Activated B cell treated with CpG ODN at 0.5 μM for 24 hours (primary cell): ENCODE measurements at regions of chrX and their contacts with region 1.

Region 1: GRCh38 chrX:37818031-37818430 is 29.3 kb downstream of the DYNLT3 start:
- DNase-seq: no peak
- ATAC-seq: peak; percentile 48
- H3K4me3 Mint-ChIP-seq: peak overlapping the region; percentile 78
- H3K27ac Mint-ChIP-seq: peak overlapping the region; percentile 93
- H3K4me1 Mint-ChIP-seq: peaks cover 81% of the 10 kb centered on the region
- H3K27me3 Mint-ChIP-seq: no peaks in the 10 kb centered on the region
- CTCF ChIP-seq: no peak

Region 2: GRCh38 chrX:37722595-37722994 is 95.4 kb before region 1 on chrX:
- CTCF ChIA-PET with region 1: no interaction called
- POLR2A ChIA-PET with region 1: no interaction called
- intact Hi-C with region 1: no loop called
- DNase-seq: no peak
- ATAC-seq: no peak
- H3K4me3 Mint-ChIP-seq: no peak overlapping the region
- H3K27ac Mint-ChIP-seq: no peak overlapping the region
- H3K4me1 Mint-ChIP-seq: no peaks in the 10 kb centered on the region
- H3K27me3 Mint-ChIP-seq: peaks cover 5% of the 10 kb centered on the region
- CTCF ChIP-seq: no peak

Region 3: DNA sequence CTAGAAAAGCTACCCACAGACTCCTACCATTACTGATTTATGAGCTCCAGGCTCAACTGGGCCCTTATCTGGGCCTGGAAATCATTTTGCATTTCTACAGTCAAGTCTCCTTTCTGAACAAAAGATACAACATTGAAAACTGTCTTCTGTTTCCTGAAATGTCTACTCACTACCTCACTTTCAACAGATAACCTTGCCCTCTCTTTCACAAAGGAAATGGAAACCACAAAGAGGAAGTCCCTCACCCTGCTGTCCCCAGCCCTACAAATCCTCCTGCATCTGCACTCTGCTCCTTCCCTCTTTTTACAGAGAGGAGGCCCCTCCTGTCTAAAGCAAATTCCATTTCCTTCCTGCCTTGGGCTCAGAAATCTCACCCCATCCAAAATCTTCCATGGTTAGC is 63.0 kb before region 1 on chrX:
- CTCF ChIA-PET with region 1: interaction called, 3 read pairs
- POLR2A ChIA-PET with region 1: interaction called, 10 read pairs
- intact Hi-C with region 1: loop called (anchors 2 kb)
- DNase-seq: no peak
- ATAC-seq: peak; percentile 93
- H3K4me3 Mint-ChIP-seq: no peak overlapping the region
- H3K27ac Mint-ChIP-seq: no peak overlapping the region
- H3K4me1 Mint-ChIP-seq: peaks cover 37% of the 10 kb centered on the region
- H3K27me3 Mint-ChIP-seq: no peaks in the 10 kb centered on the region
- CTCF ChIP-seq: no peak

Region 4: DNA sequence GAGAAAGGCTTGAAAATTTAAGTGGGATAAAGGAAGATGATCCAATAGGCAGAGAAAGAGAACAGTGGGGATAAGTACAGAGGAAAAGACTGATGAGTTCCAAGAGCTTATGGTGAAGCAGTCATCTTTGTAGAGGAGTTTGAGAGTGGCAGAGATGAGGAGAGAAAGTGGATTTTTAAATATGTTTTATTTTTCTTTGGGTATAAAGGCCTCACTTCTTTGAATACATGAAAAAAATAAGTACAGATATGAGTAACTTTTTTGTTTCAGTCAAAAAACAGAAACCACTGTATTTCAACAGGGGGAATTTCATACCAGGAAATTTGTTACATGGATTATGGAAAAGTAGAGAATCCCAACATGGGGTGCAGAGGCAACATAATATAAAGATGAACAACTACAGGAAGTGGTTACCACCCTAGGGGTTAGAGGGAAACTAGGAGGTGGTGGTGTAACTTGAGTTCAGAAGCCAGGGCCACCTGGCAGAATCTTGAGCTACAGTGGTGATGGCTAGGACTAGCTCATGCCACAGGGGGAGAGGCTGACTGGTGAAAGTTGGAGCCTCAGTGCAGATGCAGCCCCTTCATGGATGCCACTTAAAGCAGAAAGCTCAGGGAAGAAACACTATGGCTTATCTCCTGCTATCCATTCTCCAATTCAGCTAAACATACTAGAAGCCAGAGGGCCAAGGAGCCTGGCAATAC is 41.6 kb before region 1 on chrX:
- CTCF ChIA-PET with region 1: interaction called, 29 read pairs
- POLR2A ChIA-PET with region 1: interaction called, 155 read pairs
- intact Hi-C with region 1: loop called (anchors 5 kb)
- DNase-seq: no peak
- ATAC-seq: peak; percentile 73
- H3K4me3 Mint-ChIP-seq: peak overlapping the region; percentile 50
- H3K27ac Mint-ChIP-seq: peak overlapping the region; percentile 87
- H3K4me1 Mint-ChIP-seq: peaks cover 33% of the 10 kb centered on the region
- H3K27me3 Mint-ChIP-seq: no peaks in the 10 kb centered on the region
- CTCF ChIP-seq: no peak

Region 5: GRCh38 chrX:37796805-37797204 is 21.2 kb before region 1 on chrX:
- CTCF ChIA-PET with region 1: interaction called, 34 read pairs
- POLR2A ChIA-PET with region 1: interaction called, 13 read pairs
- intact Hi-C with region 1: loop called (anchors 2 kb)
- DNase-seq: no peak
- ATAC-seq: peak; percentile 90
- H3K4me3 Mint-ChIP-seq: peak overlapping the region; percentile 28
- H3K27ac Mint-ChIP-seq: peak overlapping the region; percentile 79
- H3K4me1 Mint-ChIP-seq: peaks cover 79% of the 10 kb centered on the region
- H3K27me3 Mint-ChIP-seq: no peaks in the 10 kb centered on the region
- CTCF ChIP-seq: no peak

Region 6: DNA sequence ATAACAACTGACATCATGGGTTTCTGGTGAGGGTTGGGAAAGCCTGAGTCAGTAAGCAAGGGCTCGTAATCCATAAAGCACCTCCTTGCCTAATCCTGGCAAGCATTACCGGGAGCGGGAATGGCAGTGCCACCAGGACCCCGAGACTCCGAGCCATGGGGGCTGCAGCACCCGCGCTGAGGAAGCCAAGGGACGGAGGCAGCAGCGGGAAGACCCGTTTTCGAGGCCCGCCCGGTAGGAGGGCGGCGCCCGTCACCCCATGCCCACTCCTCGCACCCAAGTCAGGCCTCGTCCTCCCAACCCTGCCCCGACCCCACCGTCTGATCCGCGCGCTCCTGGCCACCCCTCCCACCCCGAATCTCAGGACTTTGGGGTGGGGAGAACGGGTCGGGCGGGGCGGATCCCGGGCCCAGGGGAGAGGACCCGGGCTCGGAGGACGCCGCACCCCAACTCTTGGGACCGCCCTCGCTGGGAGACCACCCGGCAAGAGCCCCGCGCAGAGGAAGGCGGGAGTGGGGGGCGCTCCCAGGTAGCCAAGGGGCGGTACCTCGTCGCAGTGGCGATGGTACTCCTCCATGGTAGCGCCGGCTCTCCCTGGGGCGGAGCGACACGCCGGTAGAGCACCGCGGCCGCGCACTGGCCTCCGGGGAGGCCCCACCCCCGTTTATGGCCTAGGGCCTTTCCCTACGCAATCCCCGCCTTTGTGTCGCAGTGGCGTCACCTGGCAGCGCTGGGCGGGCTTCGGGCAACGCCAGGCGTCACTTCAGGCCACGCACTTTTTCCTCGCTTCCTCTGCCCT is 29.1 kb after region 1 on chrX and contains the start of gene DYNLT3:
- CTCF ChIA-PET with region 1: no interaction called
- POLR2A ChIA-PET with region 1: interaction called, 3 read pairs
- intact Hi-C with region 1: loop called (anchors 1 kb)
- DNase-seq: peak; percentile 72
- ATAC-seq: peak; percentile 99
- H3K4me3 Mint-ChIP-seq: peak within 1 kb of the TSS; percentile 81
- H3K27ac Mint-ChIP-seq: peak within 1 kb of the TSS; percentile 86
- H3K4me1 Mint-ChIP-seq: peaks cover 20% of the 10 kb centered on the region
- H3K27me3 Mint-ChIP-seq: no peaks in the 10 kb centered on the region
- CTCF ChIP-seq: no peak
- total RNA-seq, gene DYNLT3: 17.7 and 19.1 TPM in 2 replicates

Region 7: DNA sequence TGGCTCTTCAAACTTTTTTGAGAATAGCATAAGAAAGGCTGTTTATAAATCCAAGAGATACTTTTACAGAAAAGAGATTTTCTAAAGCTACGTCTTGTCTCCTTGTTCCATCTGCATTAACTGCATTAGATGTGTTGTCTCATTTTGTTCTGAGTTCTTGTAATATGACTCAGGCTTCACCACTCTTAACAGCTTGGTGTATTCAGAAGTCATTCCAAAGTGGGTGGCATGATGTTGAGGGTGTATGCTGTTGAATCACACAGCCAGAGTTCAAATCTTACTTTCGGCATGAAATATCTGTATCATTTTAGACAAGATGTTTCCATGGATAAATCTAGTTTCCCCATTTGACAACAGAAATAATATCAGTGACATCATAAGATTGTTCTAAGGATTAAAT is 218.4 kb after region 1 on chrX:
- CTCF ChIA-PET with region 1: no interaction called
- POLR2A ChIA-PET with region 1: no interaction called
- intact Hi-C with region 1: no loop called
- DNase-seq: no peak
- ATAC-seq: no peak
- H3K4me3 Mint-ChIP-seq: no peak overlapping the region
- H3K27ac Mint-ChIP-seq: no peak overlapping the region
- H3K4me1 Mint-ChIP-seq: no peaks in the 10 kb centered on the region
- H3K27me3 Mint-ChIP-seq: no peaks in the 10 kb centered on the region
- CTCF ChIP-seq: no peak